ENCODE measurements at regions of chr17 and their contacts with region 1.

Region 1: DNA sequence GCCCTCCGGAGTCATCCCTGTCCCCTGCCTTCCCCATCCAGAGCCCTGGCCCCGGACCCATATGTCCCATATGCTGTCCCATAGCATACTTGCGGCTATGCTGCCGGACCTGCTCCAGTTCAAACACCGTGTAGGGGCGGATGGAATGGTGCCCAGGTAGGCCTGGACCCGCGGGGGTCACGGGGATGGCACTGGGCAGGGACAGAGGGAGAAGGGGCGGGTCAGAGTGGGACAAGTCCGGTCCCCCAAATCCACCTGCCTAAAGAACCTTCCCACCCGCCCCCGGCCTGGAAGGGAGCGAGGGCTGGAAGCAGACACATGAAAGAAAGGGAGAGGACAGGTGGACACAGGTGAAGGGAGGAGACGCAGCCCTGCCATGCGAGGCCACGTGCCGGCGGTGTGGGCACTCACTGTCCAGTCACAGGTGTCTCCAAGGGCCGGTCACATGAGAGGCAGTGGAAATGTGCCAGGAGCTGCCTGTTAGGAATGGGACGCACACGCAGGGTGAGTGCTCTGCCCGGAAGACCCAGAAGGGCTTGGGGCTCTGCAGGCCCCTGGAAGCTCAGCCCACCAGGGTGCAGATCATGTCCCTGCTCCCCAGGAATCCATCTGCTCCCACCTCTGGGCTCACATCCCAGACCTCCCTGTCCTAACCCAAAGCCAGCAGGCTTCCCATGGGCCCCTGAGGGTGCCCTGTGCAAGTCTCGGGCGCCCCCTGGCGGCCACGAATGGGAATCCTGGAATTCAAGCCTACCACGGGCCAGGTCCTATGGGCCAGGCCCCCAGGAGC is 14.0 kb downstream of the UBALD2 start:
- H3K4me3 ChIP-seq: no peak overlapping the region
- H3K27ac ChIP-seq: no peak overlapping the region
- H3K4me1 ChIP-seq: no peaks in the 10 kb centered on the region
- CTCF ChIP-seq: peak; percentile 91

Region 2: DNA sequence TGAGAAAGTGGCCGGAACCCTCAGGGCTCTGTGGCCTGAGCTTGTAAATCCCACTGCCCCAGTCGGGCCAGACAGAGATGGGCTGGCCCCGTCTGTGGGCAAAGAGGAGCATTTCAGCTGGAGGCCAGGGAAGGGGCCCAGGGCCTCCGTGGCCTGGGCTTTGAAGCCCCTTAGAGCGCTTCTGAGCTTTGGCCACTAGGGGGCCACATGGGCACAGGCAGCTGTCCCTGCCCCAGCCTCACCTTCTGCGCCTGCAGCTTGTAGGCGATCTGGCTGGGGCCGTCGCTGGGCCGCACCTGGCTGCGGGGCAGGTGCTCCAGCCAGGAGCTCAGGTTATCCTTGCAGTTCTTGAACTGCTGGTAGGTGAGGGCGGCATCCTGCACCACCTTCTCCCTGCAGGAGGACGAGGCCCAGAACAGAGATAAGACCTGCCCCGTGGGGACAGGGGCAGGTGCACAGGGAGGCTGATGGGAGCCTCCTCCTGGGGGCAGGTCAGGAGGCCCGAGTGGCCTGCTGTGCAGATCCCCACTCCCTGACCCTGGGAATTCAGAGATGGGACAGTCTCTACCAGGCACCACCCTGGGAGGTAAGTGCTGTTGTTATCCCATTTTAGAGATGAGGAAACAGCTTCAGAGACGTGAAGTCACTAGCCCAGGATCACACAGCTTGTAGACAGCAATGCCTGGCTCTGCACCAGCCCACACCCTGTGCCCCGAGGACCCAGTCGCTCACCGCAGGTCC is 264.8 kb before region 1 on chr17:
- CTCF ChIA-PET with region 1: interaction called, 36 read pairs
- POLR2A ChIA-PET with region 1: no interaction called
- H3K4me3 ChIP-seq: no peak overlapping the region
- H3K27ac ChIP-seq: no peak overlapping the region
- H3K4me1 ChIP-seq: no peaks in the 10 kb centered on the region
- CTCF ChIP-seq: peak; percentile 94

Region 3: DNA sequence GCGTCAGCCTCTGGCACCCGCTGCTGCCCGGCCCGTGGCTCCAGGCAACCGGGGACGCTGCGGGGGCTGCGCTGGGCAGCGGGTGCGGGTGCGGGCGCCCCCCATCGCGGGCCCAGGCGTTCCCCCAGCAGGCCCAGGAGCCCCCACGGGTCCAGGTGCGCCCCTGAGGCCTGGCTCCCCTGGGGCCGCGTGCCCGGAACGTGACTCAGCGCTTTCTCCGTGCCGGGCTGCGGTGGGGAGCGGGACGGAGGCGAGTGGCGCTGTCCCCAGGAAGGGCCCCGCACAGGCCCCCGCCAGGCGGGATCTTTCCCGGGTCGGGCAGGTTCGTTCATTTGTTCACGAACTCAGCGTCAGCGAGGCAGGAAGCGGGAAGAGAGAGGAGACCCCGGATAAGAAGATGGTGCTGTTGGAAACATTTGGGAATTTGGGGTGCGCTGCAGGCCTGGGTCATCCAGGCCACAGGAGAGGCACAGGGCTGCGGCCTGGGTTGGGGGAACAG is 157.2 kb before region 1 on chr17:
- CTCF ChIA-PET with region 1: interaction called, 191 read pairs
- POLR2A ChIA-PET with region 1: interaction called, 7 read pairs
- H3K4me3 ChIP-seq: no peak overlapping the region
- H3K27ac ChIP-seq: no peak overlapping the region
- H3K4me1 ChIP-seq: no peaks in the 10 kb centered on the region
- CTCF ChIP-seq: no peak

Region 4: GRCh38 chr17:76182016-76182764 is 97.0 kb before region 1 on chr17:
- CTCF ChIA-PET with region 1: interaction called, 38 read pairs
- POLR2A ChIA-PET with region 1: no interaction called
- H3K4me3 ChIP-seq: no peak overlapping the region
- H3K27ac ChIP-seq: no peak overlapping the region
- H3K4me1 ChIP-seq: no peaks in the 10 kb centered on the region
- CTCF ChIP-seq: peak; percentile 91

Region 5: GRCh38 chr17:76217081-76217480 is 62.1 kb before region 1 on chr17:
- CTCF ChIA-PET with region 1: interaction called, 10 read pairs
- POLR2A ChIA-PET with region 1: no interaction called
- H3K4me3 ChIP-seq: no peak overlapping the region
- H3K27ac ChIP-seq: no peak overlapping the region
- H3K4me1 ChIP-seq: no peaks in the 10 kb centered on the region
- CTCF ChIP-seq: no peak

Region 6: DNA sequence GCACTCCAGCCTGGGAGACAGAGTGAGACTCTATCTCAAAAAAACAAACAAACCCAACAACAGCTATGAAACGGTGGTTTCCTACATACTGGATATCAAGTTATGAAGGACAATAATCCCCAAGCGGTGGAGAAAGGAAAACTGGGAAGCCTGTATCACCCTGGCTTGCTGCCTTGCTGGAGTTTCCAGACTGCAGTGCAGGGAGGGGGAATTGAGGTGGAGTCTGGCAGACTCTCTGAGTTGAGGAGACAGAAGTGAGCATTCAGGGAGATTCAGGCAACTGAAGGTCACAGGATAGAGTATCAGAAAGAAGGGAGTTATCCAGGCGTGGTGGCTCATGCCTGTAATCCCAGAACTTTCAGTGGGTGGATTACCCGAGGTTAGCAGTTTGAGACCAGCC is 17.0 kb after region 1 on chr17:
- CTCF ChIA-PET with region 1: interaction called, 58 read pairs
- POLR2A ChIA-PET with region 1: interaction called, 3 read pairs
- H3K4me3 ChIP-seq: no peak overlapping the region
- H3K27ac ChIP-seq: no peak overlapping the region
- H3K4me1 ChIP-seq: no peaks in the 10 kb centered on the region
- CTCF ChIP-seq: no peak

Region 7: GRCh38 chr17:76309461-76309860 is 30.3 kb after region 1 on chr17:
- CTCF ChIA-PET with region 1: no interaction called
- POLR2A ChIA-PET with region 1: no interaction called
- H3K4me3 ChIP-seq: no peak overlapping the region
- H3K27ac ChIP-seq: no peak overlapping the region
- H3K4me1 ChIP-seq: no peaks in the 10 kb centered on the region
- CTCF ChIP-seq: no peak